Left cardiac atrium (tissue), 4 donors: ENCODE measurements at regions of chr2 and their contacts with region 1.

Region 1: DNA sequence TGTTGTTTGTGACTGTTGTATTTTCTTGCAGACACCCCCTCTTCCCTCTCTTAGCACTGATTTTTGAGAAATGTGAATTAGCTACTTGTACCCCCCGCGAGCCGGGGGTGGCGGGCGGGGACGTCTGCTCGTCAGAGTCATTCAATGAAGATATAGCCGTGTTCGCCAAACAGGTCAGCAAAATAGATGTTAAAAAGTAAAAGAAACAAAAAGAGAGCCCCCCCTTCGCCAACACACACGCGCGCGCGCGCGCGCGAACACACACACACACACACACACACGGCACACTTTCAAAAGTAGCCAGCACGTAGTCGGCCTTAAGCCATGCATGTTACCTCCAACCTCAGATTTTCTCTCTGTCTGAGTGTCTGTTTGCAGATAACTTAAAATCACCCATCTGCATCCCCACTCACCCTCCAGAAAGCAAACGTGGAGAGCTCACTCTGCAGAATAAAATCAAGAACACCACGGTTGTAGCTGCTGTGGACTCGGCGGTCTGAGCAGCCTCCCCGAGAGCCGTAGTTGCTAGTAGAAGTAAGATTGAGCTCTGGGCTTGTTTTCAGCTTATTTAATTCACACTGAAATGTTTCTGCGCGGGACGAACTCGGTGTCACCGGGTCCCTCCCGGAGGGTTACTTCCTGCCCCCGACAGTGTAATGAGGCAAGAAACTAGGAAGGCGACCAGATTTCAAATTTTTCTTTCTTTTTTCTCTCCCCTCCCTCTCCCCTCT is 5.1 kb downstream of the MEIS1 start:
- DNase-seq: peak; percentile 23
- ATAC-seq: peak; percentile 4 to 7

Region 2: DNA sequence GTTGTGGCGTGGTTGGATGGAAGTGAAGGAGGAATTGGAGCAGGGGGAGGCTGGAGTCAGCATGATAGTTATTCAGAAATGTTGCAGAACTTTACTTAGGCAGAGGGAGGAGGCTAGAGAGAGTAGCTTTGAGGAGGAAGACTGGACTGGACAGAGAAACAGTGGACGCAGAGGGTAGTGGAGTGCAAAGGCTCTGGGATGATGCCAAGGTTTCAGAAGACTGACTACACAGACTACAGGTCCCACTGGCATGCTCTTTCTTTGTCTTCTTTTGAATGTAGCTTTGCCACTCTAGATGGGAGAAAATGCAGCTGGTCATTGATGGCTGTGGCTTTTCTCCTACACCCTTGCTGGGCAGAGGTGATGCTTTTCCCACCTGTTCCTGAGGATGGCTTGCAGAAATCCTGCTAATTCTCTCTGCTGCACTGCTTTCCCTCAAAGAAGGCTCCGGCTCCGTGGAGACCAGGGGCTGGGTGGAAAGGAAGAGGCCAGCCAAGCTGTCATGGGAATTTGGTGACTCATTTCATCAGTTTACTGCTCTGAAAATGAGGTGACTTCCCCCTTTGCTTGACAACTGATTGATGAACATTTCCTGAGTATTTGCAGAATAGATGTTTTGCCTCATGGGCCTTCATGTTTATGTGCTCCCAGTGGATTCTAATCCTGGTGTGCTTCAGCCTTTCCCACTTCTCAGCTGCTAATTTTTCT is 37.3 kb after region 1 on chr2:
- intact Hi-C with region 1: loop called in 1 of 2 experiments (anchors 2 kb)
- DNase-seq: no peak
- ATAC-seq: peak; percentile 42 to 57

Region 3: GRCh38 chr2:66495788-66496640 is 56.0 kb after region 1 on chr2:
- intact Hi-C with region 1: loop called in 1 of 2 experiments (anchors 5 kb)
- DNase-seq: peak; percentile 54
- ATAC-seq: peak; percentile 75 to 90

Region 4: GRCh38 chr2:66532972-66533868 is 93.2 kb after region 1 on chr2:
- intact Hi-C with region 1: no loop called
- DNase-seq: no peak
- ATAC-seq: peak; percentile 60 to 81